Activated CD4-positive, alpha-beta memory T cell treated with anti-CD3 and anti-CD28 coated beads for 36 hours (primary cell): ENCODE measurements at regions of chr6 and their contacts with region 1.

Region 1: DNA sequence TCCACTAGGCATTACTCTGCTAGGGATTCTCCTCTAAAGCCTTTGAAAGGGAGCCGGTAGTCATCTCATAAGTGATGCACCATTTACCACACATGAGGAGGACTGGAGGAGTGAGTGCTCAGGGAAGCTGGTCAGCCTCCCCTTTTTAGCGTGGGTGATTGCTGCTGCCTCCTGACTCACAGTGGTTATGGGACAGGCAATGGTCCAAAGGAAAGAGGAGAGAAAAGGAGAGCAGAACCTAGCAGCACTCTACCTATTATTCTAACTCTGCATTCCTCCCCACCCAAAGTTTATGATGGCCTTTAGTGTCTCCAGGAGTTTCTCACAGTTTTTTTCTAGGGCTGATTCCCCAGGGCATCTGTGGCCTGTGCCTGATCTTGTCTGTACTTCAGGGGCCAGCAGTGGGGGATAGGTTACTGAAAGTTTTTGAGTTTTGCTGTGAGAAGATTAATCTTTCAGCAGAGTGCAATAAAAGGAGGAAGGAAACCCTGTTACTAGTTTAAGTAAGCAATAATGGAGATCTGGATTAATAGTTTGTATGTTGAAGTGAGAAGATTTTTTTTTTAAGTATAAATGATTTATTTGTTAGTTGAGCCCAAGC is 36.4 kb upstream of the GCLC start:
- DNase-seq: peak; percentile 22
- H3K4me3 Mint-ChIP-seq: no peak overlapping the region
- H3K27ac Mint-ChIP-seq: peak overlapping the region; percentile 31
- H3K4me1 Mint-ChIP-seq: peaks cover 46% of the 10 kb centered on the region
- H3K27me3 Mint-ChIP-seq: no peaks in the 10 kb centered on the region

Region 2: GRCh38 chr6:53484476-53485280 is 96.6 kb before region 1 on chr6:
- CTCF ChIA-PET with region 1: no interaction called
- POLR2A ChIA-PET with region 1: no interaction called
- intact Hi-C with region 1: no loop called
- DNase-seq: peak; percentile 68
- H3K4me3 Mint-ChIP-seq: no peak overlapping the region
- H3K27ac Mint-ChIP-seq: no peak overlapping the region
- H3K4me1 Mint-ChIP-seq: peaks cover 9% of the 10 kb centered on the region
- H3K27me3 Mint-ChIP-seq: peaks cover 28% of the 10 kb centered on the region

Region 3: DNA sequence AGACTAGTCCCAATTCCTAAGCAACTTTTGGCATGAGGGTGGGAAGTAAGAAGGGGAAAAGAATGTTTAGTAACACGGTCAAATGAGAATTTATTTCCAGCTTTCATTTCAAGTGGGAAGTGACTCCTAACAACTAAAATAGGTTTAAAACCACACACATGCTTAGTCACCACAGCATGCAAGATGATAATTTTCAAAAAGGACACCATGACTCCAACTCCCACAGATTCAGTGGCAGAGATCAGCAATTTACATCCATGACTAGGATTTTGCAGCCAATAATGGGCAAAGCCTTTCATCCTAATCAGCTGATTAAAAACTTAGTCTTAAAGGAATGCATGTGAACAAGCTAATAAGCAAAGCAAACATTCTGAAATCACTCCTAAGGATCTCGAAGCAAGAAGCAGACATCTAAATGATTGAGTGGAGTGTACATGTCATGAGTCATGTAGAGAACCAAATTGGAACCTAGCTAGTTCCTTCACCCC is 11.8 kb after region 1 on chr6:
- CTCF ChIA-PET with region 1: interaction called, 3 read pairs
- POLR2A ChIA-PET with region 1: interaction called, 3 read pairs
- intact Hi-C with region 1: loop called (anchors 1 kb)
- DNase-seq: no peak
- H3K4me3 Mint-ChIP-seq: no peak overlapping the region
- H3K27ac Mint-ChIP-seq: peak overlapping the region; percentile 10
- H3K4me1 Mint-ChIP-seq: peaks cover 10% of the 10 kb centered on the region
- H3K27me3 Mint-ChIP-seq: peaks cover 9% of the 10 kb centered on the region

Region 4: GRCh38 chr6:53651764-53652401 is 70.6 kb after region 1 on chr6:
- CTCF ChIA-PET with region 1: interaction called, 10 read pairs
- POLR2A ChIA-PET with region 1: no interaction called
- intact Hi-C with region 1: loop called (anchors 1 kb)
- DNase-seq: peak; percentile 86
- H3K4me3 Mint-ChIP-seq: peak overlapping the region; percentile 85
- H3K27ac Mint-ChIP-seq: peak overlapping the region; percentile 80
- H3K4me1 Mint-ChIP-seq: peaks cover 31% of the 10 kb centered on the region
- H3K27me3 Mint-ChIP-seq: no peaks in the 10 kb centered on the region